Activated B cell treated with CpG ODN at 0.5 μM for 24 hours (primary cell): ENCODE measurements at regions of chr6 and their contacts with region 1.

Region 1: DNA sequence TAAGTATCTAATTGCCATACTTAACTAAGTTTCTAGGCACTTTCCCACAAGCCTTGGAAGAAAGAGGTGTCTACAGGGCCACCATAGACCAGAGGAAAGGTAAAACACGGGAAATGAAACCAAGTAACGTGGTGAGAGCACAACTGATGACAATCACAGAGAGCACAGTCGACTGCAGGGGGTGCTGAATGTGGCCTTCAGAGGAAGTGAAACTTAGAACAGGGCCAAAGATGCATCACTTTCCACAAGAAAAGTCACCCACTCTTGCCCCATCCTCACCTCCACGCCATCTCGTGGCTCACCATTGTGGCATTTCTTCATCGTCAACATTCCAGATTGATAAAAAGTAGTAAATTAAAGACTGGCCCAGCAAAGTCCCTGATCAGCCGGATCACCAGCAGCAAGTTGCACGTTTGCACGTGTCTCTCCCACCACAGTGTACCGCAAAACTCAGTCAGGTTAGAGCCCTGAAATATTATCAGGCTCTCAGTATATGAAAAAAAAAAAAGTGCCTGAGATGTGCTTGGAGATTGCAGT is 31.4 kb downstream of the HIVEP2 start:
- DNase-seq: peak; percentile 52
- ATAC-seq: peak; percentile 93
- H3K4me3 Mint-ChIP-seq: peak overlapping the region; percentile 78
- H3K27ac Mint-ChIP-seq: peak overlapping the region; percentile 98
- H3K4me1 Mint-ChIP-seq: peaks cover 52% of the 10 kb centered on the region
- H3K27me3 Mint-ChIP-seq: no peaks in the 10 kb centered on the region
- CTCF ChIP-seq: no peak

Region 2: DNA sequence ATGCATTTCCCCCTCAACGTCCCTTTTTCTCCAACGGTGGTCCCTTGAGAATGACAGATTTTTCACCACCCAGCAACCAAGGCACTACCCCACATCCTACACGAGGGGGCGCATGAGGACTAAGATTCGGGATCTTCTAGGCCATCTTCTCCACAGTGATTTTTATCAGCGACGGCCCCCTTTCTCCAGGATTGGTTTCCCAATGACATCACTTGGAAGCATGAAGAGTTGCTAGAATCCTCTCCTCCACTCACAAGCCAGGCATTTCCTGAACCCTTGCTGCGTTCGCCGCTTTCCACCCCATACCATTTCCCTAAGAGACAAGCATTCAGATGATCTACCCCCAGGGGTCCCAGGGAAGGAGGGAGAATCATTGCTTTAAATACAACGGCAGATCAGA is 220.6 kb before region 1 on chr6:
- CTCF ChIA-PET with region 1: no interaction called
- POLR2A ChIA-PET with region 1: no interaction called
- intact Hi-C with region 1: loop called (anchors 1 kb)
- DNase-seq: peak; percentile 42
- ATAC-seq: peak; percentile 89
- H3K4me3 Mint-ChIP-seq: no peak overlapping the region
- H3K27ac Mint-ChIP-seq: no peak overlapping the region
- H3K4me1 Mint-ChIP-seq: peaks cover 6% of the 10 kb centered on the region
- H3K27me3 Mint-ChIP-seq: no peaks in the 10 kb centered on the region
- CTCF ChIP-seq: peak; percentile 18

Region 3: DNA sequence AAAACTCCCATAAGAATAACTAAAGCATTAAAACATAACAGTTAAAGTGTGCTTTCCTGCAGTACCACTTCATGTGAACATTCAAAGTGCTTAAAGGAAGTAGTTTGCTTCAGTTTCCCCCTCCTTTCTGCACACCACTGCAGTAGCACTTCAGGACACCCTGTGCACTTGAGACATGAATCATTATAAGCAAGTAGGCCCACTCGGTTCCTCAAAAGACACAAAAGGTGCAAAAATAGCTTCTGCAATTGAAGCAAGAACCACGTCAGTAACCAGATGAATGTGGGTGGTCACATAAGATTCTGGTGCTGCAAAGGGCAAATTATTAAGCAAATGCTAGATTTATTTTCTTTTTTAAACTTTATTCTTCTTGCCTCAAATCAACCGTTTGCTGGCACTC is 129.2 kb before region 1 on chr6:
- CTCF ChIA-PET with region 1: no interaction called
- POLR2A ChIA-PET with region 1: no interaction called
- intact Hi-C with region 1: loop called (anchors 1 kb)
- DNase-seq: no peak
- ATAC-seq: peak; percentile 98
- H3K4me3 Mint-ChIP-seq: peak overlapping the region; percentile 15
- H3K27ac Mint-ChIP-seq: peak overlapping the region; percentile 78
- H3K4me1 Mint-ChIP-seq: peaks cover 34% of the 10 kb centered on the region
- H3K27me3 Mint-ChIP-seq: no peaks in the 10 kb centered on the region
- CTCF ChIP-seq: no peak

Region 4: GRCh38 chr6:142845624-142846458 is 67.7 kb before region 1 on chr6:
- CTCF ChIA-PET with region 1: no interaction called
- POLR2A ChIA-PET with region 1: interaction called, 9 read pairs
- intact Hi-C with region 1: loop called (anchors 1 kb)
- DNase-seq: no peak
- ATAC-seq: peak; percentile 60
- H3K4me3 Mint-ChIP-seq: peak overlapping the region; percentile 78
- H3K27ac Mint-ChIP-seq: peak overlapping the region; percentile 90
- H3K4me1 Mint-ChIP-seq: peaks cover 95% of the 10 kb centered on the region
- H3K27me3 Mint-ChIP-seq: no peaks in the 10 kb centered on the region
- CTCF ChIP-seq: no peak

Region 5: DNA sequence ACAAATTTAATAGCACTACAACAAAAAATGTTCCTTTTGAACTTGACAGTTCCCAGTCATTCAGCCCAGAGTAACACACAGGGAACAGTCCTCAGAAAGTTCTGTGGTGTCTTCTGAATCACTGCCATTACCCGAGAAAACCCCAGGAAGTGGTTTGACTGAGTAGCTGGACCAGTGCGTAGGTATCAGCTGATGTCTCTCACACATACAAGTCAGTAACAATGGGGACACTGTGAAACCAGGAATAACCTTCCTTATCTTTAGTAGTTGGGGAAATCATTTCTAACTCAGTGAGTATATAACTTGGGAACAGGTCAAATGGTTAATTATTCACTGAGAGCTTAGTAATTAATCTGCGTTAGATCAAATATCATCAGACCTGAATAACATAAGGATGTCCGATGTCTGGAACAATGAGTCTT is 41.7 kb before region 1 on chr6:
- CTCF ChIA-PET with region 1: interaction called, 3 read pairs
- POLR2A ChIA-PET with region 1: interaction called, 6 read pairs
- intact Hi-C with region 1: loop called (anchors 1 kb)
- DNase-seq: no peak
- ATAC-seq: peak; percentile 91
- H3K4me3 Mint-ChIP-seq: peak overlapping the region; percentile 49
- H3K27ac Mint-ChIP-seq: peak overlapping the region; percentile 82
- H3K4me1 Mint-ChIP-seq: peaks cover 84% of the 10 kb centered on the region
- H3K27me3 Mint-ChIP-seq: no peaks in the 10 kb centered on the region
- CTCF ChIP-seq: no peak

Region 6: DNA sequence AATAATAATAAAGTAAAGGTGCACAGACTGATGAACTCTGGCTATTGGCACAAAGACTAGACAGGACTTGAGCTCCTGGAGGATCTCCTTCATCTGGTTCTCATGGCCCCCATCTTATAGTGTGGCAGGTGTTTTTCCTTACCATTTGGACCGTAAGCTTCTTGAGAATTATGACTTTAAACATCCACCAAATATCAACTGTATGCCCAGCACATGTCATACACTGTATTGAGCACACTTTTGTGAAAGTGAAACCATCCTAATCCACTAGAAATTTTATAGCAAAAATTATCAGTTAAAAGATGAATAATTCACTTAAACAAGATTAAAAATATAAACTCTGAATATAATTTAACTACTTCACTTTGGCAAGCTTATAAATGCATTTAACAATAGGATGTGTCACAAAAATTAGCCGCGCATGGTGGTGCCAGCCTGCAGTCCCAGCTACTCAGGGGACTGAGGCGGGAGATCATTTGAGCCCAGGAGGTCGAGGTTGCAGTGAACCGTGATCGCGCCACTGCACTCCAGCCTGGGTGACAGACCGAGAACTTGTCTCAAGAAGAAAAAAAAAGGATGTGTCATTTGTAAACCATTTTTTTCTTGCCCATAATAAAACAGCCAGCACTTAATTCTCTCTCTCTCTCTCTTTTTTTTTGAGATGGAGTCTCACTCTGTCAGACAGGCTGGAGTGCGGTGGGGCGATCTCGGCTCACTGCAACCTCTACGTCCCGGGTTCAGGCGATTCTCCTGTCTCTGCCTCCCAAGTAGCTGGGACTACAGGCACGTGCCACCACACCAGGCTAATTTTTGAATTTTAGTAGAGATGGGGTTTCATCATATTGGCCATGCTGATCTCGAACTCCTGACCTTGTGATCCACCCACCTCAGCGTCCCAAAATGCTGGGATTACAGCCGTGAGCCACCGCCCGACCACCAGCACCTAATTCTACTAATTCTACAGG is 22.3 kb after region 1 on chr6:
- CTCF ChIA-PET with region 1: no interaction called
- POLR2A ChIA-PET with region 1: interaction called, 4 read pairs
- intact Hi-C with region 1: loop called (anchors 1 kb)
- DNase-seq: peak; percentile 35
- ATAC-seq: peak; percentile 88
- H3K4me3 Mint-ChIP-seq: peak overlapping the region; percentile 83
- H3K27ac Mint-ChIP-seq: peak overlapping the region; percentile 90
- H3K4me1 Mint-ChIP-seq: peaks cover 72% of the 10 kb centered on the region
- H3K27me3 Mint-ChIP-seq: no peaks in the 10 kb centered on the region
- CTCF ChIP-seq: no peak

Region 7: DNA sequence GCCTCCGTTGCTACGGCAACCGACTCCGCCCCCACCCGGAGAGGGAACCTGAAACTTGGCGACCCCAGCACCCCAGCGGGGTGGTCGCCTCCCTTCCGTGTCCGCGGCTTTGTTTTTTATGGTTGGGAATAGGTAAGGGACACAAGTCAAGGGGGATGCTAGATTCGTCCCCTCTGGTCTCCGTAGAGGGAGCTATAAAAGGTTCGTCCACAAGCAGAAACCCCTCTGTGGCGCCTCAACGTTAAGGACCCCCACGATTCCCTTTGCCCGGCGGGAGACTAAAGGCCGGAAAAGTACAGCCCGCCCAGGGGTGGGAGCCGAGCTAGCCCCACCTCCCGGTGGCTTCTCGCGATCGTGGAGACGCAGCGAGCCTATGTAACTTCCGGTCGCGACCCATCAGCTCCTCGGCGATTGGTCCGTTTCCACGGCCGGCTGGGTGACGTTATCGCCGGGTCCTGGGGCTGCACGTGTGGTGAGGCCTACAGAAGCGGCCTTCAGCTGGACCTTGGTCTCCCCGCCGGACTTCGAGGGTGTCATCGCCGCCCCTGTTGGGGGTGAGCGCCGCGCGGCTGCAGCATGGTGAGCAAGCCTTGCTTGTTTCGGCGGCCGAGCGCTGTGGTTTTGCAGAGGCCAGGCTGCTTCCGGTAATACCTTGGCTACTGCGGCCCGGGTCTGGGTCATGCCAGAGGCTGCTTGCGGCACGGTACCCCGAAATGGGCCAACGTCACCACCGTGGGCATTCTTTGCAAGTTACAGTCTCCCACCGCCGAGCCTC is 929.5 kb after region 1 on chr6 and contains the start of gene LTV1:
- CTCF ChIA-PET with region 1: no interaction called
- POLR2A ChIA-PET with region 1: no interaction called
- intact Hi-C with region 1: loop called (anchors 10 kb)
- DNase-seq: peak; percentile 84
- ATAC-seq: peak; percentile 97
- H3K4me3 Mint-ChIP-seq: peak within 1 kb of the TSS; percentile 92
- H3K27ac Mint-ChIP-seq: peak within 1 kb of the TSS; percentile 96
- H3K4me1 Mint-ChIP-seq: peaks cover 17% of the 10 kb centered on the region
- H3K27me3 Mint-ChIP-seq: no peaks in the 10 kb centered on the region
- CTCF ChIP-seq: no peak
- total RNA-seq, gene LTV1: 37.0 and 40.3 TPM in 2 replicates